ENCODE measurements at regions of chr19 and their contacts with region 1.

Region 1: GRCh38 chr19:15332311-15332996 is at the start of gene BRD4:
- DNase-seq: peak; percentile 73
- H3K4me3 Mint-ChIP-seq: peak within 1 kb of the TSS; percentile 94
- H3K27ac Mint-ChIP-seq: peak within 1 kb of the TSS; percentile 93
- H3K4me1 Mint-ChIP-seq: peaks cover 45% of the 10 kb centered on the region
- H3K27me3 Mint-ChIP-seq: no peaks in the 10 kb centered on the region
- total RNA-seq, gene BRD4: 109 to 111 TPM

Region 2: GRCh38 chr19:15125232-15126067 is 207.0 kb before region 1 on chr19:
- CTCF ChIA-PET with region 1: no interaction called
- intact Hi-C with region 1: loop called (anchors 10 kb)
- DNase-seq: peak; percentile 99
- H3K4me3 Mint-ChIP-seq: peak overlapping the region; percentile 88
- H3K27ac Mint-ChIP-seq: peak overlapping the region; percentile 94
- H3K4me1 Mint-ChIP-seq: peaks cover 31% of the 10 kb centered on the region
- H3K27me3 Mint-ChIP-seq: no peaks in the 10 kb centered on the region

Region 3: DNA sequence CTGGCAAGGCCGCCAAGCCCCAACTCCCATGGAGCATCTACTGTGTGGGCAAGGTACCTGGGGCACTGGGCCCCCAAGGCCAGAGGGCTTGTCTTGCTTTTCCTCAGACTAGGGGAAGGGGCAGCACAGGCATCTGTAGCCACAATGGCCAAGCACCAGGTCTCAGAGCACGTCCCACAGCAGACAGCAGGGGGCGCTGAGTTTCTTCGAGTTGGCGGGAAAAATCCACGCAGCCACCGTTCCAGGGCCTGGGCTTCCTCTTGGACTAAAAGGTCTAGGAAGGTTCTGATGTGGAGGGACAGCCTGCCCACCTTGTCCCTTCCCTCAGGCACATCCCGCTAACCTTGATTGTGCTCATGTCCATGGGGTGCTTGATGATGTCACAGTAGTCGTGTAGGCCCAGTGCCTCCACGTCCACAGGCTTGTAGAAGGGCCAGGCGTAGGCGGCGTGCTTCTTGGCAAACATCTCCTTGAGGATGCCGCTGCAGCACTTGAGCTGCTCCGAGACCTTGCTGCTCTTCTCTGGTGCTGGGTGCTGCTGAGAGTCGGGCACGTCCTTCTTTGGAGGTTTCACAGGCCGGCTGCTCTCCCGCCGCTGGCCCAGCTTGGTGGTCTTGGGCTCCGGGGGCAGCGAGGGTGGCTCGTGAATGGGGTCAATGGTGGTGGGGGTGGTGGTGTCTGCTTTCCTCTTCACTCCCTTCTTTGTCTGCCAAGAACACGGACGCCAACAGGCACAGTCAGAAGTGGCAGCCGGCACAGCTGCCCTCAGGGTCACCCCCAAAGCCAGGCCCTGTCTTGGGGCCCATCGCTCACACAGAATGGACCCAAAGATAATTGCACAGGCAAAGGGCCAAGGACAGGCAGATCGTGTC is 68.2 kb before region 1 on chr19:
- CTCF ChIA-PET with region 1: interaction called, 5 read pairs
- intact Hi-C with region 1: loop called (anchors 5 kb)
- DNase-seq: peak; percentile 82
- H3K4me3 Mint-ChIP-seq: no peak overlapping the region
- H3K27ac Mint-ChIP-seq: no peak overlapping the region
- H3K4me1 Mint-ChIP-seq: peaks cover 6% of the 10 kb centered on the region
- H3K27me3 Mint-ChIP-seq: no peaks in the 10 kb centered on the region

Region 4: GRCh38 chr19:15304140-15304705 is 28.2 kb before region 1 on chr19:
- CTCF ChIA-PET with region 1: interaction called, 3 read pairs
- intact Hi-C with region 1: loop called (anchors 2 kb)
- DNase-seq: peak; percentile 43
- H3K4me3 Mint-ChIP-seq: no peak overlapping the region
- H3K27ac Mint-ChIP-seq: peak overlapping the region; percentile 79
- H3K4me1 Mint-ChIP-seq: peaks cover 85% of the 10 kb centered on the region
- H3K27me3 Mint-ChIP-seq: no peaks in the 10 kb centered on the region

Region 5: DNA sequence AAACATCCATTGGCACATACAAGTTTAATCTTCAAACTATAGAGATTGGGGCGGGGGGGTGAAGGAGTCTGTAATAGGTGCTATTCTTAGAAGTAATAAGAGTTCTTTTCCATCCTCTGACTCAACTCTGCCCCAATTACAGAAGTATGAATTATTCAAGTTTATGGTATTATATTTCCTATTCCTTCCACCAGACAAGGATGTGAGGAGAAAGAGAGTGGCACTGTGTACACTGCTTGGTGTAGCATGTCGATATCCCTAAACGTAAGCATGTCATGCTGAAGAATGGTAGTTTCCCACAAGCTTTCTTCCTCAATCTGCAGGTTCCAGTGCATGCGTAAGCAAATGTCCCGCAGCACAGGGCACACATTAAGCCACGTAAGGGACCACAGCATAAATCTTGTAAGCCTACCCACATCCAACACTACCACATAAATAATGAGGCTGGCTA is 14.2 kb before region 1 on chr19:
- CTCF ChIA-PET with region 1: interaction called, 3 read pairs
- intact Hi-C with region 1: loop called (anchors 1 kb)
- DNase-seq: no peak
- H3K4me3 Mint-ChIP-seq: no peak overlapping the region
- H3K27ac Mint-ChIP-seq: peak overlapping the region; percentile 54
- H3K4me1 Mint-ChIP-seq: peaks cover 85% of the 10 kb centered on the region
- H3K27me3 Mint-ChIP-seq: no peaks in the 10 kb centered on the region

Measured in activated naive CD4-positive, alpha-beta T cell treated with anti-CD3 and anti-CD28 coated beads for 36 hours (primary cell).